ENCODE measurements at regions of chr6 and their contacts with region 1.

Region 1: DNA sequence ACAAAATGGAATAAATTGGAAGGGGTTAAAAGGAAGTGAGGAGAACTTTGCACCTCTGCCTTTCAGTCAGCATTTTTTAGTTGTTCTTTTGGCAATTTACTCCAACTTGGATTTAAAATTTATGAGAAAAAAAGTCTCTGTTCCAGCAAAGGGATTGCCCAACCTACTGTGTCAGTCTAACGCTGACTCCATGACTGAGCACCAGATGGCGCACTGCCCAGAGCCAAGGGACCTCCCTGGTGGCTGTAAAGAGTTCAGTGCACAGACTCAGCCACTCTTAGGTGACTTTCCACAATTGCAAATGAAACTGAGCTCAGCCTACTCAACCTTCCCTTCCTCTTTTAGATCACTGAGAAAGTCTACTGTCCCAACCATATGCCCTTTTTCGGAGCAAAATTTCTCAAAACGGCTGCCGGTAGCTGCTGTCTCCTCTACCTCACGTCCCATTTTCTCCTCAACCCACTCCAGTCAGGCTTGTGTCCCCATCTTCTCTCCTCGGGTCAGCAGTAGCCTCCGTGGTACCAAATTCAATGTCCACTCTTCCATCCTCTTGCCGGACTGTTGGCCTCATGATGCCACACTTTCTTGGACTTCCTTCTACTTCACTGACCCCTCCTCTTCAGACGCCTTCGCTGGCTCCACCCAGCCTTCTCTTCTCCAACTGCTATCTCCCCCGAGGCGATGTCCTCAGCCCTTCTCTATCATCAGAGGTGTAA is 38.7 kb downstream of the GSTA2 start:
- DNase-seq: peak; percentile 84
- H3K4me3 ChIP-seq: peak overlapping the region; percentile 26
- H3K4me3 Mint-ChIP-seq: peak overlapping the region; percentile 76
- H3K27ac Mint-ChIP-seq: peak overlapping the region; percentile 97
- H3K4me1 ChIP-seq: peaks cover 54% of the 10 kb centered on the region
- H3K4me1 Mint-ChIP-seq: peaks cover 51% of the 10 kb centered on the region
- H3K27me3 ChIP-seq: no peaks in the 10 kb centered on the region
- H3K27me3 Mint-ChIP-seq: no peaks in the 10 kb centered on the region
- CTCF ChIP-seq: peak; percentile 81 to 84

Region 2: DNA sequence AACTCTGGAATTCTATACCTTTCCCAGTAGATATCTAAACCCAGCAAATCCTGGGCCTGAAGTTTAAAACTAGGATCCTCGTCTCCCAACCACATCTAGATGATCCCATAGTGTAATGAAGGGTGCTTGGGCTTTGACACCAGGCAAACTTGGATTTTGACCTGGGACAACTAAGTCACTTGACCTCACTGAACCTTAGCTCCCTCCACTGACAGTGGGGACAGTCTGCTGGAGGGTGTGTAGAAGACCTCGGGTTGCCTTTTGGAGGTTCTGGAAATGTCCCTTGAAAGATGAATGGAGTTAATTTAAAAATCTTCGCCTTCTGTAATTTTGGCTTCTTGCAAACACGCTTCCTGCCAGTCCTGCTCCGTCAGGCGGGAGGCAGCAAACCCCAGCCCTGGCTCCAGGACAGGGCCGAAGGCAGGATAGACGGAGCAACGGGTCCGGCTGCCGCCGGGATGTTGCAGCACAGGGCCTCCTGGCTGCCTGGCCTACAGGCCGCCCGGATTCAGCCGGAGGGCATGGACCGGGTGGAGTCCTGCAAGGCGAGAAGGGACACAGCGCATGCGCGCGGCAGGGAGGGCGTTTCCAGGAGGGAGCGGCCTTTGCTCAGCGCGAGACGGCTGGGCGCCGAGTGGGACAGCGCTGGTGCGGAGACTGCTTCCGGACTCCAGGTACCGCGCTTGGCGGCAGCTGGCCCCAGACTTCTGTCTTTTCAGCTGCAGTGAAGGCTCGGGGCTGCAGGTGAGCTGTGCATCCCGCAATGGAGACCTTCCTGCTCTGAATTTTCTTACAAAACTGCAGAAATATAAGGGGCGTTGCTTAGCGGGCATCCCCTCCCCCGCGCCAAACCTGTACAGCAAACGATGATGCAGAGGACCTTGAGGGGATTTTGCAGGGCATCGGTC is 53.8 kb before region 1 on chr6 and contains the start of gene TMEM14A:
- CTCF ChIA-PET with region 1: no interaction called
- POLR2A ChIA-PET with region 1: no interaction called
- intact Hi-C with region 1: loop called (anchors 2 kb)
- DNase-seq: peak; percentile 98 to 99
- H3K4me3 ChIP-seq: peak within 1 kb of the TSS; percentile 84
- H3K4me3 Mint-ChIP-seq: peak within 1 kb of the TSS; percentile 83
- H3K27ac Mint-ChIP-seq: peak within 1 kb of the TSS; percentile 77
- H3K4me1 ChIP-seq: peaks cover 25% of the 10 kb centered on the region
- H3K4me1 Mint-ChIP-seq: peaks cover 12% of the 10 kb centered on the region
- H3K27me3 ChIP-seq: no peaks in the 10 kb centered on the region
- H3K27me3 Mint-ChIP-seq: no peaks in the 10 kb centered on the region
- CTCF ChIP-seq: peak in 1 of 2 experiments; percentile 0
- total RNA-seq, gene TMEM14A: 39.9 and 41.9 TPM in 2 replicates

Region 3: DNA sequence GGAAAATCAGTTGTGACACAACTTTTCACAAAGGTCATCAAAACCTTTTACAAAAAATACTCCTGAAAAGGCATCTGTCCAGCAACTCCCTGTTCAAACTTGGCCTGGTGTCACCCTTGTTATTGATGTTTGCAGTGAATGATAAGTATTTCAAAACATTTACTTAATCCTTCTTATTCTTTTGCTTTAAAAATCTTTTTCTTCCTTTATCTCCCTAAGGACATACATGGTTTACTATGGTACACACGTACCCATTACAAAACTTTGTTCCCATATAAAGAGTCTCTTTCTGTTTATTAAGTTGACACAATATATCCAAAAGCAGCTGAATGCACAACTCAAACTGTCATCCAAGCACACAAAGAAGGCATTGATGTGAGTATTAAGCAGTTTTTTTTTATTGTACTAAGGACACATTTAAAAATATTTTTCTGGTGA is 21.2 kb after region 1 on chr6:
- CTCF ChIA-PET with region 1: no interaction called
- POLR2A ChIA-PET with region 1: interaction called, 5 read pairs
- intact Hi-C with region 1: loop called (anchors 1 kb)
- DNase-seq: peak in 1 of 2 experiments; percentile 36
- H3K4me3 ChIP-seq: no peak overlapping the region
- H3K4me3 Mint-ChIP-seq: no peak overlapping the region
- H3K27ac Mint-ChIP-seq: peak overlapping the region; percentile 85
- H3K4me1 ChIP-seq: peaks cover 27% of the 10 kb centered on the region
- H3K4me1 Mint-ChIP-seq: peaks cover 34% of the 10 kb centered on the region
- H3K27me3 ChIP-seq: no peaks in the 10 kb centered on the region
- H3K27me3 Mint-ChIP-seq: no peaks in the 10 kb centered on the region
- CTCF ChIP-seq: no peak

Region 4: GRCh38 chr6:52760105-52760765 is 35.7 kb after region 1 on chr6:
- CTCF ChIA-PET with region 1: interaction called, 23 read pairs
- POLR2A ChIA-PET with region 1: interaction called, 10 read pairs
- intact Hi-C with region 1: loop called (anchors 1 kb)
- DNase-seq: no peak
- H3K4me3 ChIP-seq: no peak overlapping the region
- H3K4me3 Mint-ChIP-seq: no peak overlapping the region
- H3K27ac Mint-ChIP-seq: no peak overlapping the region
- H3K4me1 ChIP-seq: peaks cover 6% of the 10 kb centered on the region
- H3K4me1 Mint-ChIP-seq: peaks cover 10% of the 10 kb centered on the region
- H3K27me3 ChIP-seq: no peaks in the 10 kb centered on the region
- H3K27me3 Mint-ChIP-seq: no peaks in the 10 kb centered on the region
- CTCF ChIP-seq: no peak

Region 5: GRCh38 chr6:52801188-52801841 is 76.8 kb after region 1 on chr6:
- CTCF ChIA-PET with region 1: no interaction called
- POLR2A ChIA-PET with region 1: no interaction called
- intact Hi-C with region 1: loop called (anchors 2 kb)
- DNase-seq: no peak
- H3K4me3 ChIP-seq: no peak overlapping the region
- H3K4me3 Mint-ChIP-seq: no peak overlapping the region
- H3K27ac Mint-ChIP-seq: no peak overlapping the region
- H3K4me1 ChIP-seq: no peaks in the 10 kb centered on the region
- H3K4me1 Mint-ChIP-seq: no peaks in the 10 kb centered on the region
- H3K27me3 ChIP-seq: no peaks in the 10 kb centered on the region
- H3K27me3 Mint-ChIP-seq: no peaks in the 10 kb centered on the region
- CTCF ChIP-seq: no peak

Region 6: DNA sequence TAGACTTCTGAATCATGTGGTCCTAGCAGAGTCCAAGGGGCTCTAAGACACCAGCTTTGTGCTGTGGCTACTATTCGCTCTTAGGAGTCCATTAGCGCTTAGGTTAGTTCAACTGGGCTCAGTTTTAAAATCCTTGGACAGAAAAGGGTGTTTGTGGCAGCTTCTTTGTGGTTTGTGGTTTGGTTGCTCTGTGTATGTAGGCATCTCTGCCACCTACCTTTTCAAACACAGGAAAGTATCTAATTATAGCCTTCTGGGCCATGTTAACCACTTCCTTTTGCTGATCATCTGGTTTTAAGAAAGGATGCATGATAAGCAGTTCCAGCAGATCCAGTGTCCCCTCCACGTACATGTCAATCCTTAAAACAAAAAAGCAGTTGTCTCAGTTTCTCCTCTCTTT is 259.7 kb after region 1 on chr6:
- CTCF ChIA-PET with region 1: no interaction called
- POLR2A ChIA-PET with region 1: no interaction called
- intact Hi-C with region 1: no loop called
- DNase-seq: no peak
- H3K4me3 ChIP-seq: no peak overlapping the region
- H3K4me3 Mint-ChIP-seq: no peak overlapping the region
- H3K27ac Mint-ChIP-seq: no peak overlapping the region
- H3K4me1 ChIP-seq: no peaks in the 10 kb centered on the region
- H3K4me1 Mint-ChIP-seq: no peaks in the 10 kb centered on the region
- H3K27me3 ChIP-seq: no peaks in the 10 kb centered on the region
- H3K27me3 Mint-ChIP-seq: no peaks in the 10 kb centered on the region
- CTCF ChIP-seq: no peak

Region 7: GRCh38 chr6:52995913-52996645 is 271.5 kb after region 1 on chr6:
- CTCF ChIA-PET with region 1: interaction called, 4 read pairs
- POLR2A ChIA-PET with region 1: no interaction called
- intact Hi-C with region 1: loop called (anchors 1 kb)
- DNase-seq: peak; percentile 43 to 45
- H3K4me3 ChIP-seq: peak overlapping the region; percentile 20
- H3K4me3 Mint-ChIP-seq: peak overlapping the region; percentile 81
- H3K27ac Mint-ChIP-seq: peak overlapping the region; percentile 87
- H3K4me1 ChIP-seq: peaks cover 1% of the 10 kb centered on the region; the same call in 1 of the 2 replicates
- H3K4me1 Mint-ChIP-seq: peaks cover 13% of the 10 kb centered on the region
- H3K27me3 ChIP-seq: no peaks in the 10 kb centered on the region
- H3K27me3 Mint-ChIP-seq: no peaks in the 10 kb centered on the region
- CTCF ChIP-seq: no peak

Region 8: DNA sequence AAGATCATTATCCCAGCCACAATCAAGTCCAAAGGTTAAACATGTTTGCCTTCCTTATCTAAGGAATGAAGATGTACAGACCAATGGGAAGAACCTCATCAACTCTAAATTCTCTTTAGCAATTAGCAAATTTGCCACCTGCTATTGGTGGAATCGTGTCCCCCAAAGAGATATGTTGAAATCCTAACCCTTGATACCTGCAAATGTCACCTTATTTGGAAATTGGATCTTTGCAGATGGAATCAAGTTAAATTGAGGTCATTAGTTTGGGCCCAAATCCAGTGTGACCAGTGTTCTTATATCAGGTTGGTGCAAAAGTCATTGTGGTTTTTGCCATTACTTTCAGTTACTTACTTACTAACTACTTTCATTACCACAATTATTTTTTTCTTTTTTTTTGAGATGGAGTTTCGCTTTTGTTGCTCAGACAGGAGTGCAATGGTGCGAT is 909.6 kb after region 1 on chr6:
- CTCF ChIA-PET with region 1: no interaction called
- POLR2A ChIA-PET with region 1: no interaction called
- intact Hi-C with region 1: loop called (anchors 1 kb)
- DNase-seq: peak in 1 of 2 experiments; percentile 65
- H3K4me3 ChIP-seq: no peak overlapping the region
- H3K4me3 Mint-ChIP-seq: peak overlapping the region; percentile 62
- H3K27ac Mint-ChIP-seq: peak overlapping the region; percentile 96
- H3K4me1 ChIP-seq: peaks cover 47% of the 10 kb centered on the region
- H3K4me1 Mint-ChIP-seq: peaks cover 27% of the 10 kb centered on the region
- H3K27me3 ChIP-seq: no peaks in the 10 kb centered on the region
- H3K27me3 Mint-ChIP-seq: no peaks in the 10 kb centered on the region
- CTCF ChIP-seq: no peak